Activated CD4-positive, alpha-beta T cell treated with anti-CD3 and anti-CD28 coated beads for 36 hours (primary cell): ENCODE measurements at regions of chr3 and their contacts with region 1.

Region 1: GRCh38 chr3:27484015-27484844 is at the start of gene SLC4A7:
- DNase-seq: peak; percentile 99
- ATAC-seq: peak; percentile 95
- H3K4me3 Mint-ChIP-seq: peak within 1 kb of the TSS; percentile 99
- H3K27ac Mint-ChIP-seq: peak within 1 kb of the TSS; percentile 96
- H3K4me1 Mint-ChIP-seq: peaks cover 30% of the 10 kb centered on the region
- H3K27me3 Mint-ChIP-seq: no peaks in the 10 kb centered on the region
- total RNA-seq, gene SLC4A7: 46.4 to 53.0 TPM

Region 2: DNA sequence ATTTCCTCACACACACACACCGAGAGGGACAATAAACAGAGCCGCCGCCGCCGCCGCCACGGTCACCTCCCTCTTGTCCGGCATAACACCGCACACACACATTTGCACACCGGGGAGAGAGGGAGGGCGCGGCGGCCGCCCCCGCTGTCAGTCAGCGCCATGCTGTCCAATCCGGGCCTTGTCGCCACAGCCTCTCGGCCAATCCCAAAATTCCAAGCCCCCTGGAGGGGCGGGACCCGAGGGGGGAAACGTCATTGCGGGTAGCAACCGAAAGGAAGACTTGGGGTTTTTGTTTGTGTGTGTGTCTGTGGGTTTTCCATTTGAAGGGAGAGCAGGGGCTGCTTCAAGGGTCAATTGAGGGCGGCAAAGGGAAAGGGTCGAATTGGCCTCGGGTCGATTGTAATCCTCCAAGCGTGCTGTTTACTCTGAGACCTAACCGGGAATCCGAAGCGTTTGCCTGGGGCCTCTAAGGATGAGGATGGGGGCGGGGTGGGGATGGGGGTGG is 1819.4 kb before region 1 on chr3 and contains the start of gene TOP2B:
- CTCF ChIA-PET with region 1: no interaction called
- POLR2A ChIA-PET with region 1: no interaction called
- intact Hi-C with region 1: loop called in 1 of 2 experiments (anchors 2 kb)
- DNase-seq: peak; percentile 96
- ATAC-seq: peak; percentile 93
- H3K4me3 Mint-ChIP-seq: peak within 1 kb of the TSS; percentile 83
- H3K27ac Mint-ChIP-seq: peak within 1 kb of the TSS; percentile 100
- H3K4me1 Mint-ChIP-seq: peaks cover 44% of the 10 kb centered on the region
- H3K27me3 Mint-ChIP-seq: no peaks in the 10 kb centered on the region
- total RNA-seq, gene TOP2B: 132 to 156 TPM

Region 3: DNA sequence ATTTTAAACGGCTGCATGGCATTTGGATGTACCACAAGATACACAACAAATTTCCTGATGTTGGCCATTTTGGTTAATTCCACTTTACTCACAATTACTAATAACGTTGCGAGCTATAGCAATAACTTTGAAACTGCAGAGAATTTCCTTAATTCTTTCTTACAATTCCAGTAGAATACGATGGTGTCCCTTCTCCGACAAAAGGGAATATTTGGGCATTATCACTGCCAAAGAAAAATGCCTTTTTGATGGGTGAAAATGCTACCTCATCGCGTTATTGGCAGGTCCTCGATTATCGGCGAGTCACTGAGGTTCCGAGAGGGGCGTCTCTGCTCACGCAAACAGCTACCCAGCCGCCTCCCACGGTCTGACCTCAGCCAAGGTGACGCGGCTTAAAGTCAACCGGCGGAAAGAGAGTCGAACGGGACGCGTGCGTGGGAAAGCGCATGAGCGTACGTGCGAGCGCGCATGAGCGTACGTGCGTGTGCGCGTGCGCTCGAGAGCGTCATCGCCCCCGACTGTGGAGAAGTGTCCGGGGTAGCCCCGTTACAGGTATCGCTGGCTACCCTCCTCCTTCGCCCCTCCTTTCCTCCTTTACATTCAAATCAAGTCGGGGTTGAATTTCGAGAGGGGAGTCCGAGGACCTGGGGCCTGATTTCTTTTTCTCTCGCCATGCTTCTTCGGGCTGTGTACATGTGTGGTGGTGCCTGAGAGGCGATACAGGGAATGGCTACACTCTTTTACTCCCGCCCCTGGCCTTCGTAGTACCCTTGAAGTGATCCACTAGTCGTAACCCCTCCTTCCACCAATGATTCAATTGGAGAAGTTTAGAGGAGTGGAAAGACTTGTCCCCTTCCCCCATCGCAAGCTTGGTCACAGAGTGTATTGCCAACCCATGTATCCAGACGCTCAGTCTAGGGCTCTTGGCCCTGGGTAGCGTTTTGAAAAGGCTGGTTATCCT is 1694.4 kb before region 1 on chr3 and contains the start of gene OXSM:
- CTCF ChIA-PET with region 1: no interaction called
- POLR2A ChIA-PET with region 1: no interaction called
- intact Hi-C with region 1: loop called in 1 of 2 experiments (anchors 10 kb)
- DNase-seq: peak; percentile 97
- ATAC-seq: peak; percentile 89
- H3K4me3 Mint-ChIP-seq: peak within 1 kb of the TSS; percentile 92
- H3K27ac Mint-ChIP-seq: peak within 1 kb of the TSS; percentile 99
- H3K4me1 Mint-ChIP-seq: peaks cover 49% of the 10 kb centered on the region
- H3K27me3 Mint-ChIP-seq: no peaks in the 10 kb centered on the region
- total RNA-seq, gene OXSM: 12.4 to 18.1 TPM

Region 4: GRCh38 chr3:26989037-26989436 is 495.2 kb before region 1 on chr3:
- CTCF ChIA-PET with region 1: no interaction called
- POLR2A ChIA-PET with region 1: no interaction called
- intact Hi-C with region 1: no loop called
- DNase-seq: no peak
- ATAC-seq: no peak
- H3K4me3 Mint-ChIP-seq: no peak overlapping the region
- H3K27ac Mint-ChIP-seq: no peak overlapping the region
- H3K4me1 Mint-ChIP-seq: no peaks in the 10 kb centered on the region
- H3K27me3 Mint-ChIP-seq: no peaks in the 10 kb centered on the region

Region 5: GRCh38 chr3:27454914-27455313 is 29.3 kb before region 1 on chr3:
- CTCF ChIA-PET with region 1: no interaction called
- POLR2A ChIA-PET with region 1: interaction called, 4 read pairs
- intact Hi-C with region 1: loop called in 1 of 2 experiments (anchors 1 kb)
- DNase-seq: no peak
- ATAC-seq: peak; percentile 89
- H3K4me3 Mint-ChIP-seq: no peak overlapping the region
- H3K27ac Mint-ChIP-seq: peak overlapping the region; percentile 65
- H3K4me1 Mint-ChIP-seq: peaks cover 65% of the 10 kb centered on the region
- H3K27me3 Mint-ChIP-seq: no peaks in the 10 kb centered on the region

Region 6: DNA sequence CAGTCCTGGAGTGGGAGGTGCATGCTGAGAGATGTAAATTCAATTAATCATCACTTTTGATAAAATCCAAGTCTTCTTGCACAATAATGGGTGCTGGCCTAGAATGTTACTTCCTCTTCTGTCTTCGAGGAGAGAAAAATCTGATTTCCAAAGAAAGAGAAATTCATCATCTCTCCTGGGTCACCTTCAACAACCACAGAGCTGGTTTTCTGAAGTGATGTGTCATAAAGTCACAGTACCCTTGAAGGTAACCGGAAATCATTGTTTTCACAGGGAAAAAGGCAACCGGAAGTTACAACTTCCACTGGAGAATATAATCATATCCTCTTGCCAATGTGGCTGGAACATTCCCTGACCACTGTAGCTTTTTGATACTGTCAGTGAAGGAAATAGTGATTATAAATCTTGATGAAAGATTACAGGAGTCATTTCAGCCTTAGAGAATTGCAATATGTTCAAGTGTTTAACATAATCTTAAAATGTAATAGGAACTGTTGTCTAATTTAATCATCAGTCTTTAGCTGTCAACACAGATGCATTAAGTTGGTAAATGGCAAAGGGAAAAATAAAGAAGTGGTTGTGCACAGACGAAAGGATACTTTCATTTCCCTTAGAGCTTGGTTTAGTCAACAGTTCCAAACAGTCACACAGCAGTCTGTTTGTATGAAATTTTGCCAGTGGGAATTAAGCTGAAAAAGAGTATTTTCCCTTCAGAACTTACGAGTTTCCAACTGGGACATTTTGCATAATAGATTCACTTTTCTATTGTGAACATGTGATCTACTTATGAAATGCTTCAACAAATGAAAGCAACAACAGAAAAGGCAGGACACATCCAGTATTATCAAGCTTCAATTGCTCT is 106.4 kb after region 1 on chr3:
- CTCF ChIA-PET with region 1: interaction called, 3 read pairs
- POLR2A ChIA-PET with region 1: no interaction called
- intact Hi-C with region 1: loop called in 1 of 2 experiments (anchors 2 kb)
- DNase-seq: peak; percentile 22
- ATAC-seq: peak; percentile 79
- H3K4me3 Mint-ChIP-seq: peak overlapping the region; percentile 41
- H3K27ac Mint-ChIP-seq: peak overlapping the region; percentile 81
- H3K4me1 Mint-ChIP-seq: peaks cover 26% of the 10 kb centered on the region
- H3K27me3 Mint-ChIP-seq: no peaks in the 10 kb centered on the region

Region 7: GRCh38 chr3:27681245-27681748 is 197.1 kb after region 1 on chr3:
- CTCF ChIA-PET with region 1: interaction called, 4 read pairs
- POLR2A ChIA-PET with region 1: no interaction called
- intact Hi-C with region 1: loop called (anchors 1 to 5 kb)
- DNase-seq: peak; percentile 49
- ATAC-seq: peak; percentile 84
- H3K4me3 Mint-ChIP-seq: peak overlapping the region; percentile 44
- H3K27ac Mint-ChIP-seq: peak overlapping the region; percentile 80
- H3K4me1 Mint-ChIP-seq: peaks cover 8% of the 10 kb centered on the region
- H3K27me3 Mint-ChIP-seq: no peaks in the 10 kb centered on the region

Region 8: DNA sequence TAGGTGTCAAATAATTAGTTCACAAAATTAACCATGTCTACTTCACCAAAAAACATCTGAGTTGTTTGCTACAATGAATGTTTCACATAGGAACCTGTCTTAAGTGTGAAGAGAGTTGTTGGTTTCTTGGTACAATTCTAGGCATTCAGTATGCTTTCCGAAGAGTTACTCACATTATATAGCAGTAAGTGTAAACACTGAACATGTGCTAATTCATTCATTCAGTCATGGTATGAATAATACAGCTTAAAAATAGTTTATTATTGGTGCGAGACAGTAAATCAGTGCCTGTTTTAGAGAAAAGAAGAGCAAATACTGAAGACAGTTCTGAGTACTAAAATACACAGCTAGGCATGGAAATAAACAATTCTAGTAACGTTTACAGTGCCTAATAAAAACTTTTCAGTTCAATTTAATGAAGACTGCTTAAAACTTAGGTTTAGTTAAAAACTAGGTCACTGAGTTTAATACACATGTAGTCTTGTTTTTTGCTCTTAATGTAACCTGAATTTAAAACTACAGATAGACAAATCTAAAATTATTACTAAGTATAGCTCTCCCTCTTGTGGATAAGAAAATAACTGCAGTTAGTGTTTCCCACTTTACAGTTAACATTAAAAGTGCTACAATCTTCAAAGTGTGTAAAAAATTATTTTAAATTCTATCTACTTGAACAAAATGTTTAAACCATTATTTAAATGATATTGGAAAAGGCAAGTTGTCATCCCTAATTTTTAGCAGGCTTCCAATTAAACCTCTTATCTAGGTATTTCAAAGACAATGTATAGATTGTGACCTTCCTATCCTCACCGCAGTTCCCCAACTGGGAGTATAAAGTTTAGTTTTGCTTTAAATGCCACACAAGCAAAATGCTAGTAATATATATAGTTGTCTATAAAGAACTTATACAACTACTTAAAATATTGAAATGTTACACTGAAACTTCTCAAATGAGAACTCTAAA is 844.2 kb after region 1 on chr3:
- CTCF ChIA-PET with region 1: no interaction called
- POLR2A ChIA-PET with region 1: no interaction called
- intact Hi-C with region 1: loop called (anchors 5 kb)
- DNase-seq: no peak
- ATAC-seq: no peak
- H3K4me3 Mint-ChIP-seq: no peak overlapping the region
- H3K27ac Mint-ChIP-seq: no peak overlapping the region
- H3K4me1 Mint-ChIP-seq: peaks cover 14% of the 10 kb centered on the region
- H3K27me3 Mint-ChIP-seq: no peaks in the 10 kb centered on the region